GM12878 (cell line): ENCODE measurements at regions of chr4 and their contacts with region 1.

Region 1: GRCh38 chr4:141307241-141307689 is 86.6 kb downstream of the ZNF330 start:
- DNase-seq: peak; percentile 95
- ATAC-seq: peak; percentile 99
- H3K4me3 ChIP-seq: no peak overlapping the region
- H3K27ac ChIP-seq: no peak overlapping the region
- H3K4me1 ChIP-seq: peaks cover 25% of the 10 kb centered on the region
- H3K27me3 ChIP-seq: no peaks in the 10 kb centered on the region
- CTCF ChIP-seq: peak; percentile 86 to 89 (median 86)
- EP300 ChIP-seq: peak; percentile 89 to 90
- POLR2A ChIP-seq: no peak
- RAD21 ChIP-seq: peak; percentile 96

Region 2: DNA sequence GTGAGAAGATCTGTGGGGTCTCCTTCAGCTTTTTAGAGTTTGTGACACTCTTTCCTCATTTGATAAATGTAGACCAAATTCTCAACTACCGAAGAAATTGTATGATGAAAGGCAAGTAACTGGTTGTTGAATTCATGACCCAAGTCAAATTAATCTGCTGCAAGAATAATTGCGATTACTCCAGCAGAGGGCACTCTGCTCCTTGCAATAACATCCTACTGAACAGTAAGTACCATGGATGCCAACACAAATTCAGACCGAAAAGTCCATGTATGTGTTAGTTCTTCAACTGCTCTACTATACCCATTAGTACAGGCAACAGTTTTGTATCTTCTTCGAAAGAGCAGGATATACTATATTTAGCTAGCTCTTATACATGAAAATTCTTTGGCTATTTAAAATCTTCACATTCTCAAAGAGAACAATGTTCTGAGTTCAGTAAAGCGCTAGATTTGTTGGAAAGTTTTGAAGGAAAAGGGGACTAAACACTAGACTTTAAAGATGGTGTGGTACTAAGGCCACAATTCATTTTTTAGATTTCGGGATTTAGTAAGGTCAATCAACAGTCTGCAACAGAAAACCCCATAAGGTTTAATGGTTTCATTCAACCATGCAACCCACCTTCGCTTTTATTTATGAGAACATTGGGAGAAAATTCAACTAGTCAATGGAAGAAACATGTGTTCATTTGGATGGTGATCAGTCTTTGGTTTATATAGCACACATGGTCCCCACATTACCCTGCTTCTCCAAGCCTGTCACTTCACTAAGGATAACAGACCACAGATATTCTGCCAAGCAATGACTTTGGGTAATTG is 445.7 kb before region 1 on chr4:
- CTCF ChIA-PET with region 1: no interaction called
- POLR2A ChIA-PET with region 1: no interaction called
- RAD21 ChIA-PET with region 1: no interaction called
- SMC1A ChIA-PET with region 1: no interaction called
- in situ Hi-C with region 1: no loop called
- intact Hi-C with region 1: loop called (anchors 2 kb)
- DNase-seq: peak; percentile 17
- ATAC-seq: peak; percentile 90
- H3K4me3 ChIP-seq: no peak overlapping the region
- H3K27ac ChIP-seq: no peak overlapping the region
- H3K4me1 ChIP-seq: no peaks in the 10 kb centered on the region
- H3K27me3 ChIP-seq: peaks cover 0 to 2% of the 10 kb centered on the region in 2 experiments; a peak in 1 of 4 replicates
- CTCF ChIP-seq: peak; percentile 64 to 81 (median 80)
- EP300 ChIP-seq: no peak
- POLR2A ChIP-seq: no peak
- RAD21 ChIP-seq: peak; percentile 88

Region 3: DNA sequence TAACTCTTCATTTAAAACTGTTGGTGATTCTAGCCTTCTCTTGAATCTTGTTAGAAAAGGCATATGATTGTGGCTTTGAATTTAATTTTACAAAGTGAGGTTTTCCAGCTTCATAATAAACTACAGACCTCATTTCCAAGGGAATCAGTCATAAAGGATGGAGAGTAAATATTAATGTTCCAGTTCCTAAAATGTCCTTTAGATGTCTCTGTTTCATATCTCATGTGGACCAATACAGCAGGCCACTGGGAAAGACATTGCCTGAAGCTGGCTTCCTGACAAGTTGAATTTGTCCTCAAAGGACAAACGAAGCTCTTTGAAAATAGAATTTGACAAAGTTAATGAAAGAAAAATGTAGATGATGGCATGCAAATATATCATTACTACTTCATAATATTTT is 38.9 kb after region 1 on chr4:
- CTCF ChIA-PET with region 1: interaction called, 11 read pairs
- POLR2A ChIA-PET with region 1: no interaction called
- RAD21 ChIA-PET with region 1: interaction called, 6 read pairs
- SMC1A ChIA-PET with region 1: no interaction called
- in situ Hi-C with region 1: no loop called
- intact Hi-C with region 1: no loop called
- DNase-seq: no peak
- ATAC-seq: peak; percentile 56; the same call in 2 of the 3 replicates
- H3K4me3 ChIP-seq: no peak overlapping the region
- H3K27ac ChIP-seq: no peak overlapping the region
- H3K4me1 ChIP-seq: peaks cover 5% of the 10 kb centered on the region; the same call in 1 of the 2 replicates
- H3K27me3 ChIP-seq: no peaks in the 10 kb centered on the region
- CTCF ChIP-seq: peak; percentile 29 to 55 (median 36); a peak in 3 of 6 replicates
- EP300 ChIP-seq: no peak
- POLR2A ChIP-seq: no peak
- RAD21 ChIP-seq: peak; percentile 83

Region 4: GRCh38 chr4:141497627-141498026 is 190.4 kb after region 1 on chr4:
- CTCF ChIA-PET with region 1: no interaction called
- POLR2A ChIA-PET with region 1: no interaction called
- RAD21 ChIA-PET with region 1: no interaction called
- SMC1A ChIA-PET with region 1: no interaction called
- in situ Hi-C with region 1: no loop called
- intact Hi-C with region 1: loop called (anchors 2 kb)
- DNase-seq: peak; percentile 46
- ATAC-seq: peak; percentile 97
- H3K4me3 ChIP-seq: no peak overlapping the region
- H3K27ac ChIP-seq: no peak overlapping the region
- H3K4me1 ChIP-seq: 0 out of 2 replicates have a peak, but pooled peaks cover 4% of the 10 kb centered on the region
- H3K27me3 ChIP-seq: no peaks in the 10 kb centered on the region
- CTCF ChIP-seq: no peak
- EP300 ChIP-seq: 0 out of 4 replicates have a peak, but pooled peaks of 1 of the 2 experiments have one; percentile 19
- POLR2A ChIP-seq: no peak
- RAD21 ChIP-seq: peak; percentile 26

Region 5: DNA sequence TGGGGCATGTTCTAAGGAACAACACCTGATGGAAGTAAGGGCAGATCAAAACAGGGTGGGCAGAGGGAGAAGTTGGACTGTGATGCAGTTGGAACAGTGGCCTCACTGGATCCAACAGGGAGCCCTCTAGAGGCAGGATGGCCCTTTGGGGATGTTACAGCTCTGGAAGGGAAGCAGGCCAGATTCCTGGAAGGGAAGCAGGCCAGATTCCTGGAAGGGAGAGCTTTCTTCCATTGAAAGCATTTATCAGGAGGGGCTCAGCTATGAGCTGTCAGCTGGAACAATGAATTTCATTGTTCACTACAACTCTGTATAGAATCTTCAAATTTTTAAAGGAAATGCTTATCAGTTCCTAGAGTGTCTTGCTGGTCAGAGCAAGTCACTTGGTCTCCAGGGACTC is 346.8 kb after region 1 on chr4:
- CTCF ChIA-PET with region 1: interaction called, 3 read pairs
- POLR2A ChIA-PET with region 1: no interaction called
- RAD21 ChIA-PET with region 1: interaction called, 8 read pairs
- SMC1A ChIA-PET with region 1: interaction called, 3 read pairs
- in situ Hi-C with region 1: no loop called
- intact Hi-C with region 1: loop called (anchors 5 kb)
- DNase-seq: no peak
- ATAC-seq: no peak
- H3K4me3 ChIP-seq: no peak overlapping the region
- H3K27ac ChIP-seq: no peak overlapping the region
- H3K4me1 ChIP-seq: peaks cover 6% of the 10 kb centered on the region
- H3K27me3 ChIP-seq: no peaks in the 10 kb centered on the region
- CTCF ChIP-seq: peak; percentile 14 to 32 (median 30); a peak in 3 of 6 replicates
- EP300 ChIP-seq: no peak
- POLR2A ChIP-seq: no peak
- RAD21 ChIP-seq: no peak; the same call in 1 of the 2 replicates

Region 6: DNA sequence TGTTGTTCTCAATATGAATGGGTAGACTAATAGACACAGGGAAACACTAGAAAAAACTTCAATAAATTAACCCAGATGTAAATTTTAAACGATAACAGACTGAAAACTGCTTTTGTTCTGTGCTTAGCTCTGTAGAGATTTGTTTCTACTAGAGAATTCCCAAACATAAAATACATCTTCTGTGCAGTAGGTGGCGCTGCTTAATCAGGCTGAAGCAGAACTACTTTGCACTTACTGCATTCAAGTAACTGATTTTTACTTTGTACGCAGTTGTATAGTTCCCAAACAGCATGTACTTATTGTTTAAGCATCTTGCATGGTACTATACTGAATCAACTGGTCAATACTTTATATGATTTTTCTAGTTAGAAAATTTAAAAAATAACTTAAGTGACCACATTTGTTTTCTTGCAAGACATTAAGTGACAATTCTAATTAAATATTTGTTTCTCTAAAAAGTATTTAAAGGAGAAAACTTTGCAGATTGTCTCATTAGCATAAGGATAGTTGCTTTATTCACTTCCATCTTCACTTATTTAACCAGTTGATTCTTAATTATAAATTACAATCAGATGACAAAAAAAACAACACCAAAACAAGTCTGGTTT is 819.7 kb after region 1 on chr4:
- CTCF ChIA-PET with region 1: interaction called, 4 read pairs
- POLR2A ChIA-PET with region 1: no interaction called
- RAD21 ChIA-PET with region 1: no interaction called
- SMC1A ChIA-PET with region 1: no interaction called
- in situ Hi-C with region 1: loop called (anchors 10 kb)
- intact Hi-C with region 1: loop called (anchors 5 kb)
- DNase-seq: peak; percentile 13
- ATAC-seq: peak; percentile 76
- H3K4me3 ChIP-seq: no peak overlapping the region
- H3K27ac ChIP-seq: no peak overlapping the region
- H3K4me1 ChIP-seq: no peaks in the 10 kb centered on the region
- H3K27me3 ChIP-seq: no peaks in the 10 kb centered on the region
- CTCF ChIP-seq: peak; percentile 71 to 77 (median 74)
- EP300 ChIP-seq: no peak
- POLR2A ChIP-seq: no peak
- RAD21 ChIP-seq: peak; percentile 85